Kidney (tissue), 22 donors: ENCODE measurements at regions of chr7 and their contacts with region 1.

Region 1: DNA sequence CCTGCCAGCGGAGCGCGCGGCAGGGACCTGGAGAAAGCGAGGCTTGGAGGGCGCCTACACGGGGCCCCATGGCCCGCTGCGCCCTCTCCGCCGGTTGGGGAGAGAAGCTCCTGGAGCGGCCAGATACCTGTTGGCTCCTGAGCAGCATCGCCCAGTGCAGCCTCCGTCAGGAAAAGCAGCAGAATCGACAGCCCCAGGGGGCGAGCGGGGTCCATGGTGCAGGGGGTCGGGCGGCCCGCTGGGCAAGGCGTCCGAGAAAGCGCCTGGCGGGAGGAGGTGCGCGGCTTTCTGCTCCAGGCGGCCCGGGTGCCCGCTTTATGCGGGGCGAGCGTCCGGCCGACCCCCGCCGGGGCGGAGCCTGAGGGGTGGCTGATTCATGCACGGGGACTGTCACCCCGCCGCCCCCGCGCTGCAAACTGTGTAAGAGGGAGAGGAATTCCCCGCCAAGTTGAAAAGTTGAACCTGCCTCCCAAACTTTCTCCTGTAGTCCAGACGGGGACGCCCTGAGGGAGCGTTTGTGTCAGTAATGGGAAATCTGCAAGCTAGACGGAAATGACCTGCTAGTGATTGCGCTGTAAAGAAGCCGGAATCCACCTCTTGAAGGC is at the start of gene TFPI2:
- DNase-seq: peak; percentile 69 to 88 (median 86)
- H3K4me3 ChIP-seq: peak within 1 kb of the TSS; percentile 56 to 78 (median 77)
- H3K27ac ChIP-seq: peak within 1 kb of the TSS in 1 of 2 donors; percentile 30
- H3K4me1 ChIP-seq: peaks cover 0 to 2% (median 0%) of the 10 kb centered on the region in 3 donors
- H3K27me3 ChIP-seq: no peaks in the 10 kb centered on the region
- CTCF ChIP-seq: no peak
- total RNA-seq, gene TFPI2: 42.5 TPM

Region 2: DNA sequence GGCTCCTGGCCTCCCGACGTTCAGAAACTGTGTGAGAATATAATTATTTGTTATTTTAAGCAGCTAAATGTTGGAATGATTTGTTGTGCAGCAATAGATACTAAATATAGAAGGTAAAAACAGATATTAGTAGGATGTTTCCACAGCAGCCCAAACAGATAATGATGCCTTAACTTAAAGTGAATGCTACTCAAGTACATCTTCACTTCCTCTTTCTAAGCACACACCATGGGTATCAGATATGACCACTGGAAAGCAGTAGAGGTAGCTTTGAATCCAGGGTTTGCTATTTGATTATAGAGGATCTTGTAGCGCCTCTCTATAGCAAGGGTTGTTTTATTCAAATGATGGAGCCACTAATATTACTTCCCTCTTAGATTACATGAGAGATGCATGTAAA is 151.8 kb after region 1 on chr7:
- intact Hi-C with region 1: no loop called
- DNase-seq: no peak
- H3K4me3 ChIP-seq: no peak overlapping the region
- H3K27ac ChIP-seq: no peak overlapping the region
- H3K4me1 ChIP-seq: no peaks in the 10 kb centered on the region
- H3K27me3 ChIP-seq: no peaks in the 10 kb centered on the region
- CTCF ChIP-seq: no peak

Region 3: GRCh38 chr7:94087664-94088352 is 197.2 kb after region 1 on chr7:
- intact Hi-C with region 1: loop called (anchors 10 kb)
- DNase-seq: peak in 3 of 5 donors; percentile 22 to 49 (median 44)
- H3K4me3 ChIP-seq: peak overlapping the region in 2 of 3 donors; percentile 50 to 60
- H3K27ac ChIP-seq: no peak overlapping the region
- H3K4me1 ChIP-seq: no peaks in the 10 kb centered on the region
- H3K27me3 ChIP-seq: no peaks in the 10 kb centered on the region
- CTCF ChIP-seq: peak; percentile 85